CD4-positive, alpha-beta memory T cell (primary cell): ENCODE measurements at regions of chr19 and their contacts with region 1.

Region 1: GRCh38 chr19:47190167-47190727 is 40.8 kb downstream of the BBC3 start:
- DNase-seq: peak; percentile 60 to 78 (median 64)
- H3K4me3 ChIP-seq: no peak overlapping the region
- H3K4me3 Mint-ChIP-seq: peak overlapping the region in 7 of 8 donors; percentile 5 to 81 (median 56)
- H3K27ac ChIP-seq: peak overlapping the region; percentile 47
- H3K27ac Mint-ChIP-seq: peak overlapping the region; percentile 62 to 94 (median 85)
- H3K4me1 ChIP-seq: peaks cover 72% of the 10 kb centered on the region
- H3K4me1 Mint-ChIP-seq: peaks cover 40 to 71% (median 48%) of the 10 kb centered on the region in 4 donors
- H3K27me3 ChIP-seq: no peaks in the 10 kb centered on the region
- H3K27me3 Mint-ChIP-seq: no peaks in the 10 kb centered on the region

Region 2: GRCh38 chr19:47130591-47131227 is 59.5 kb before region 1 on chr19 and contains the start of gene SAE1:
- CTCF ChIA-PET with region 1: interaction called, 19 read pairs
- POLR2A ChIA-PET with region 1: interaction called, 7 read pairs
- intact Hi-C with region 1: no loop called
- DNase-seq: peak; percentile 88 to 91 (median 90)
- H3K4me3 ChIP-seq: peak within 1 kb of the TSS; percentile 82 to 89
- H3K4me3 Mint-ChIP-seq: peak within 1 kb of the TSS; percentile 97 to 100 (median 100)
- H3K27ac ChIP-seq: peak within 1 kb of the TSS; percentile 73
- H3K27ac Mint-ChIP-seq: peak within 1 kb of the TSS; percentile 93 to 99 (median 98)
- H3K4me1 ChIP-seq: peaks cover 43% of the 10 kb centered on the region
- H3K4me1 Mint-ChIP-seq: peaks cover 33 to 55% (median 44%) of the 10 kb centered on the region in 4 donors
- H3K27me3 ChIP-seq: no peaks in the 10 kb centered on the region
- H3K27me3 Mint-ChIP-seq: no peaks in the 10 kb centered on the region
- total RNA-seq, gene SAE1: 35.3 to 36.0 TPM

Region 3: DNA sequence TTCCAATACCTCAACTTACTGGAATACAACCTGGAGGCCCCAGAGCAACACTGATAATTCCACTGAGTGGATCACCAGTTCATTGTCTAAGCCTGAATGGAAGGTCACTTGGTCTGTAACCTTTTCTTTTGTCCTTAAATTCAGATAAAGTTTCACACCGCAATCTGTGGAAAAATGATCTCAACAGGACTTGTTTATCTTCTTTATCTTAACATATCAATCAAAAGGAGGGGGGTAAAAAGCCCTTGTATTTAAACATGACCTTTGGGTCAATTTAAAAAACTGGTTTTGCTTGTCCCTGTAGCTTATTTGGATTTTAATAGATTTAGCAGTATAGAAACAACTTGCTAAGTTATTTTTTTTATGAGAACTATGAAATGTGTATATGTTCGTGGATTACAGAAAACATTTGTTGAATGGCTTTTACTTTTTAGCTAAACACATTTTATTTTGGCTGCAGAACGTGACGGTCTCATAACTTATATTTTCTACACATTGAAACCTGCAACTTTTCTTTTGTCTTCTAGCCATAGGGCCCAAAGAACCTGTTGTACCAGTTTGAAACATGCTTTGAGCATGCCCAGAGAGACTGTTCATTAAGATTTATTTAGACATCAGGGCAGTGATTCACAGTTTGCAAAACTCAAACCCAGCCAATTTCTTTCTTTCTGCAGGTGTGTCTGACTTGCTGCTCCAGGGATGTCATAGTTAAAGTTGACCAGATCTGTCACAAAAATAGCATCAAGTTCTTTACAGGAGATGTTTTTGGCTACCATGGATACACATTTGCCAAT is 37.8 kb before region 1 on chr19:
- CTCF ChIA-PET with region 1: interaction called, 74 read pairs
- POLR2A ChIA-PET with region 1: interaction called, 140 read pairs
- intact Hi-C with region 1: loop called (anchors 1 kb)
- DNase-seq: no peak
- H3K4me3 ChIP-seq: no peak overlapping the region
- H3K4me3 Mint-ChIP-seq: no peak overlapping the region
- H3K27ac ChIP-seq: no peak overlapping the region
- H3K27ac Mint-ChIP-seq: no peak overlapping the region
- H3K4me1 ChIP-seq: peaks cover 47% of the 10 kb centered on the region
- H3K4me1 Mint-ChIP-seq: peaks cover 26 to 65% (median 43%) of the 10 kb centered on the region in 4 donors
- H3K27me3 ChIP-seq: no peaks in the 10 kb centered on the region
- H3K27me3 Mint-ChIP-seq: no peaks in the 10 kb centered on the region

Region 4: GRCh38 chr19:47168065-47168464 is 22.2 kb before region 1 on chr19:
- CTCF ChIA-PET with region 1: interaction called, 14 read pairs
- POLR2A ChIA-PET with region 1: interaction called, 140 read pairs
- intact Hi-C with region 1: no loop called
- DNase-seq: no peak
- H3K4me3 ChIP-seq: no peak overlapping the region
- H3K4me3 Mint-ChIP-seq: no peak overlapping the region
- H3K27ac ChIP-seq: no peak overlapping the region
- H3K27ac Mint-ChIP-seq: peak overlapping the region in 1 of 7 donors; percentile 37
- H3K4me1 ChIP-seq: no peaks in the 10 kb centered on the region
- H3K4me1 Mint-ChIP-seq: peaks cover 8 to 25% (median 20%) of the 10 kb centered on the region in 4 donors
- H3K27me3 ChIP-seq: no peaks in the 10 kb centered on the region
- H3K27me3 Mint-ChIP-seq: no peaks in the 10 kb centered on the region

Region 5: DNA sequence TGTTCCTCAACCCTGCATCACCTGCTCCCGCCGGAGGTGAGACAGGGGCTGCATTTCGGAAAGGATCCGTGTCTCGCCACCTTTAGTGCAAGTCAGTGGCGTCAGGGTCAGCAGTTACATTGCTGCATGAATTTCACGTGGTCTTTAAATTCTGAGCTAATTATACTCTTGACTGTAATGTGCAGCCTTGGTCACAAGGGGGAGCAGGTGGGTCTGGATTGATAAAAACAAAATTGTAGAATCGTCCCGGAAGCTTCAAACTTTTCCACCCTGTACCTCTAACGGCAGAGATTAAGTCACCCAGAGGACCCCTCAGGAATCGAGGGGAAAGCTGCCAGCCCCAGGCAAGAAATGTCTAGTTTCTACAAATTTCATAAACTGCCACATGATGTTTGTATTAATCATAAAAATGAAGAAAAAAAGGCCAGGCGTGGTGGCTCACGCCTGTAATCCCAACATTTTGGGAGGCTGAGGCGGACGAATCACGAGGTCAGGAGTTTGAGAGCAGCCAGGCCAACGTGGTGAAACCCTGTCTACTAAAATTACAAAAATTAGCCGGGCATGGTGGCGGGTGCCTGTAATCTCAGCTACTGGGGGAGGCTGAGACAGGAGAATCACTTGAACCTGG is 20.6 kb after region 1 on chr19:
- CTCF ChIA-PET with region 1: interaction called, 54 read pairs
- POLR2A ChIA-PET with region 1: interaction called, 22 read pairs
- intact Hi-C with region 1: loop called (anchors 1 kb)
- DNase-seq: peak; percentile 68 to 83 (median 75)
- H3K4me3 ChIP-seq: no peak overlapping the region
- H3K4me3 Mint-ChIP-seq: peak overlapping the region in 2 of 8 donors; percentile 4 to 48
- H3K27ac ChIP-seq: no peak overlapping the region
- H3K27ac Mint-ChIP-seq: peak overlapping the region; percentile 15 to 89 (median 43)
- H3K4me1 ChIP-seq: peaks cover 12% of the 10 kb centered on the region
- H3K4me1 Mint-ChIP-seq: peaks cover 6 to 15% (median 7%) of the 10 kb centered on the region in 4 donors
- H3K27me3 ChIP-seq: no peaks in the 10 kb centered on the region
- H3K27me3 Mint-ChIP-seq: no peaks in the 10 kb centered on the region

Region 6: GRCh38 chr19:47231215-47231984 is 41.2 kb after region 1 on chr19:
- CTCF ChIA-PET with region 1: interaction called, 13 read pairs
- POLR2A ChIA-PET with region 1: interaction called, 48 read pairs
- intact Hi-C with region 1: loop called (anchors 5 kb)
- DNase-seq: peak; percentile 88 to 96 (median 90)
- H3K4me3 ChIP-seq: peak overlapping the region in 1 of 2 donors; percentile 53
- H3K4me3 Mint-ChIP-seq: peak overlapping the region; percentile 73 to 88 (median 83)
- H3K27ac ChIP-seq: peak overlapping the region; percentile 76
- H3K27ac Mint-ChIP-seq: peak overlapping the region; percentile 71 to 97 (median 93)
- H3K4me1 ChIP-seq: peaks cover 51% of the 10 kb centered on the region
- H3K4me1 Mint-ChIP-seq: peaks cover 15 to 32% (median 22%) of the 10 kb centered on the region in 4 donors
- H3K27me3 ChIP-seq: no peaks in the 10 kb centered on the region
- H3K27me3 Mint-ChIP-seq: no peaks in the 10 kb centered on the region

Region 7: GRCh38 chr19:47315125-47315821 is 125.0 kb after region 1 on chr19:
- CTCF ChIA-PET with region 1: no interaction called
- POLR2A ChIA-PET with region 1: no interaction called
- intact Hi-C with region 1: no loop called
- DNase-seq: no peak
- H3K4me3 ChIP-seq: no peak overlapping the region
- H3K4me3 Mint-ChIP-seq: no peak overlapping the region
- H3K27ac ChIP-seq: no peak overlapping the region
- H3K27ac Mint-ChIP-seq: no peak overlapping the region
- H3K4me1 ChIP-seq: no peaks in the 10 kb centered on the region
- H3K4me1 Mint-ChIP-seq: peaks cover 0 to 2% (median 0%) of the 10 kb centered on the region in 4 donors
- H3K27me3 ChIP-seq: no peaks in the 10 kb centered on the region
- H3K27me3 Mint-ChIP-seq: peaks cover 5 to 11% of the 10 kb centered on the region in 2 donors